B cell (primary cell): ENCODE measurements at regions of chr2 and their contacts with region 1.

Region 1: DNA sequence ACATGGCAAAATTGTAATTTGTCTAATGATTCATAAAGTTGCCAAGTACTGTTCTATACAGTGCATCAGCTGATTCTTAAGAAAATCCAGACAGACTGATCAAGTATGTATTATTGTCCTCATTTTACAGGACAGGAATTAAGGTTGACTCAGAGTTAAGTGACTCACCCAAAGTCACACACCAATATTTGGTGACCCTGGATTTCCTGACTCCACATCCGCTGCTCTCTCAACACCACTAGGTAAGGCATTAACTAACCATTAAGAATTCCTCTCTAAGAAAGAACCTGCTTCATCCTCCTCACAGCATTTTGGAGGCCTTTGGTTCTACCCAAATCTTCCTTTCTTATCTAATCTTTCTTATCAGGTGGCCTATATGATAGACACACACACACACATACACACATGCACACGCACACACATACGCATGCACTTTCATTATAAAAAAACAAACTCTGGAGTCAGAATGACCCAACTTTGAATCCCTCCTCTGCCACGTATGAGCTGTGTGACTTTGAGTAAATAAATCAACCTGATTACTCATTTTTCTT is 150.8 kb downstream of the ANKRD44 start:
- DNase-seq: no peak
- ATAC-seq: peak; percentile 42
- H3K4me3 ChIP-seq: no peak overlapping the region
- H3K4me3 Mint-ChIP-seq: peak overlapping the region; percentile 68
- H3K27ac ChIP-seq: peak overlapping the region; percentile 60 to 93
- H3K27ac Mint-ChIP-seq: peak overlapping the region; percentile 90
- H3K4me1 ChIP-seq: peaks cover 79 to 81% of the 10 kb centered on the region in 2 donors
- H3K4me1 Mint-ChIP-seq: peaks cover 81% of the 10 kb centered on the region
- H3K27me3 ChIP-seq: no peaks in the 10 kb centered on the region
- H3K27me3 Mint-ChIP-seq: no peaks in the 10 kb centered on the region
- CTCF ChIP-seq: no peak

Region 2: GRCh38 chr2:197145471-197146138 is 14.1 kb before region 1 on chr2:
- CTCF ChIA-PET with region 1: interaction called, 13 read pairs
- POLR2A ChIA-PET with region 1: interaction called, 4 read pairs
- intact Hi-C with region 1: loop called (anchors 2 kb)
- DNase-seq: peak; percentile 93
- ATAC-seq: peak; percentile 88
- H3K4me3 ChIP-seq: no peak overlapping the region
- H3K4me3 Mint-ChIP-seq: peak overlapping the region; percentile 76
- H3K27ac ChIP-seq: peak overlapping the region; percentile 93 to 98
- H3K27ac Mint-ChIP-seq: peak overlapping the region; percentile 99
- H3K4me1 ChIP-seq: peaks cover 87 to 88% of the 10 kb centered on the region in 2 donors
- H3K4me1 Mint-ChIP-seq: peaks cover 82% of the 10 kb centered on the region
- H3K27me3 ChIP-seq: no peaks in the 10 kb centered on the region
- H3K27me3 Mint-ChIP-seq: no peaks in the 10 kb centered on the region
- CTCF ChIP-seq: no peak

Region 3: DNA sequence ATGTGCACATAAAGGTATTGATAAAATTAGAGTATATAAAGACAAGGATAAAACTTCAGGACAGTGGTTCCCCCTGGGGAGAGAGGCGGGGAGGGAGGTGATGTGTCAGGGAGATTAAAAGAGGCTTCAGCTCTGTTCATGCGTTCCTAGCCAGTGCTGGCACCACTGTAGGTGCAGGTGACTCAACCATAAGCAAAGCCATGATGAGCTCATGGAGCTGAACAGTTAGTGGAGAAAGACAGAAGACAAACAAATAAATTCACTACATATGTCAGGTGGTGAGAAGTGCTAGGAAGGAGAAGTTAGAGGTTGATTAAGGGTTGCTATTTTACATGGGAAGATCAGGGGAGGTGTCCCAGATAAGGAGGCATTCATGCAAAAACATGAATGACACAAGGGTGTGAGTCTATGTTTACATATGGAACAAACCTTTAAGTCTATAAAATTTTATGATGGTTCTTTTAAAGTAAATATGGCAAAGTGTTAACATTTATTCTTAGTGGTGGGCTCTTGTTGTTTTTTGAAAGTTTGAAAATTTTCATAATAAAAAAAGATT is 14.9 kb after region 1 on chr2:
- CTCF ChIA-PET with region 1: interaction called, 29 read pairs
- POLR2A ChIA-PET with region 1: no interaction called
- intact Hi-C with region 1: loop called (anchors 2 kb)
- DNase-seq: no peak
- ATAC-seq: peak; percentile 21
- H3K4me3 ChIP-seq: no peak overlapping the region
- H3K4me3 Mint-ChIP-seq: peak overlapping the region; percentile 2
- H3K27ac ChIP-seq: peak overlapping the region in 1 of 2 donors; percentile 48
- H3K27ac Mint-ChIP-seq: peak overlapping the region; percentile 39
- H3K4me1 ChIP-seq: peaks cover 49 to 59% of the 10 kb centered on the region in 2 donors
- H3K4me1 Mint-ChIP-seq: peaks cover 63% of the 10 kb centered on the region
- H3K27me3 ChIP-seq: no peaks in the 10 kb centered on the region
- H3K27me3 Mint-ChIP-seq: no peaks in the 10 kb centered on the region
- CTCF ChIP-seq: no peak